ENCODE measurements at regions of chr22 and their contacts with region 1.

Region 1: DNA sequence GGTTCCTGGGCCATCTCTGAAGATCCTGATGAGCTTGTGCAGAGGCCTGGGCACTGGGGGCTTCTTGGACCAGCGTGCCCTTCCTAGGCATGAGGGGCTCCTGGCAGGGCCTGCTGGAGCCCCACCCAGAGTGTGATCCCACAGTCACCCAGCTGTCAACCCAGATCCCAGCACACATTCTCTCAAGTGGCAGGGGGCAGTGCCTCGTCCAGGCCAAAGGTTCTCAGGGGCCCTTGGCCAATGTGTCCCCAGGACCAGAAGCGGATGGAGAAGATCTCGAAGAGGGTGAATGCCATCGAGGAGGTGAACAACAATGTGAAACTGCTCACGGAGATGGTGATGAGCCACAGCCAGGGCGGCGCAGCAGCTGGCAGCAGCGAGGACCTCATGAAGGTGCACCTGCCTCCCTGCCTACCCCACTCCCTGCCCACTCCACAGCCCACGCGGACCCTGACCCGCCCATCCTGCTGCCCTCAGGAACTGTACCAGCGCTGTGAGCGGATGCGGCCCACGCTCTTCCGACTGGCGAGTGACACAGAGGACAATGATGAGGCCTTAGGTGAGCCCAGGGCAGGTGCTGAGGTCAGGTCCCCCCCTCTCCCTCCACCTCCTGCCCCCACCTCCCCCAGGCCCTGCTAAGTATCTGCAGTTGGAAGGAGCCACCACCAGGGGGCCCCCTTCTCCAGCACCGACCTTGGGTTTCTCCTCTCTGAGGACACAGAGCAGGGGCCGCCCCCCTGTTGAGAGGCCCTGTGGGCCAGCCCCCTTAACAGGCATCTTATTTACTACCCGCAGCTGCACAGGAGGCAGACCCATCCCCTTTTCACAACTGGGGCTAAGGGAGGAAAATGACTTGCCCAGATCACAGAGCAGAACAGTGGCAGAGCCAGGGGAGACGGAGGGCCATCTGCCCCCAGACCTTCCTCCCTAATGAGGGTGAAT is 14.7 kb downstream of the GGA1 start:
- DNase-seq: peak; percentile 83
- ATAC-seq: peak; percentile 83
- H3K4me3 ChIP-seq: no peak overlapping the region
- H3K4me3 Mint-ChIP-seq: peak overlapping the region; percentile 61
- H3K27ac ChIP-seq: peak overlapping the region; percentile 47 to 52
- H3K27ac Mint-ChIP-seq: peak overlapping the region; percentile 92
- H3K4me1 ChIP-seq: peaks cover 40 to 69% of the 10 kb centered on the region in 2 donors
- H3K4me1 Mint-ChIP-seq: peaks cover 60% of the 10 kb centered on the region
- H3K27me3 ChIP-seq: no peaks in the 10 kb centered on the region
- H3K27me3 Mint-ChIP-seq: no peaks in the 10 kb centered on the region
- CTCF ChIP-seq: peak; percentile 86

Region 2: DNA sequence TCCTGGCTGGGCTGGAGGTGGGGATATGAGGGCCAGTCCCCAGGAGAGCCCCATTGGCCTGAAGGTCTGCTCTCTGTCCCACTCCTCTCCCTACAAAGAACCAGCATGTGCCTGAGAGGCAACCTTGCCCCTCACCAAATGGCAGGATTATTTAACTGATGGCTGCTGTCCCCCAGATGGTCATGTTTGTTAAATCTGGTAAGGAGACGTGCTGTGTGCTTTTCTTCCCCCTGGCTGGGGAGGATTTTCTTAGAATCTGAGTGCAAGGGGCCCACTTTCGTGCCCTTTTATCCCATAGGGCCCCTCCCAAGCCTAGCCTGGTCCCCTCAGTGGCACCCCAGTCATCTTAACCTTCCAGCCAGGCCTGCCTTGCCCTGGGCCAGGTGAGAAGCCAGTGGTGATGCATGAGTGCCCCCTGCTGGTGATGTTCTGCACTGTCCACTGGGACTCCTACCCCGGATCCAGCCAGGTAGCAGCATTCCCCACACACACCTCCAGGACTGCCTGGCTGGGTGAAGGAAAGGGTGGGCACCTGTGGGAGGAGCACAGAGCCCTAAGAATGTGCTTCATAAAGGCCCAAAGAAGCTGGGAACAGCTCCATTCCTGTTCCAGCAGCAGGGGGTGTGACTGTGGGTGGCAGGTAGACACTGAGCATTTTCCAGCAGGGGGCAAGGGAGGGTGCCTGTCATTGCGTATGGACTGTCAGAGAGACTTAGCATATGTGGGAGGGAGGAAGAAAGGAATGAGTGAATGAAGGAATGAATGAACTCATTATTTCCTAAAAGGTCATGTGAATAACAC is 166.1 kb before region 1 on chr22:
- CTCF ChIA-PET with region 1: no interaction called
- POLR2A ChIA-PET with region 1: no interaction called
- intact Hi-C with region 1: no loop called
- DNase-seq: peak; percentile 82
- ATAC-seq: peak; percentile 95
- H3K4me3 ChIP-seq: no peak overlapping the region
- H3K4me3 Mint-ChIP-seq: no peak overlapping the region
- H3K27ac ChIP-seq: no peak overlapping the region
- H3K27ac Mint-ChIP-seq: no peak overlapping the region
- H3K4me1 ChIP-seq: no peaks in the 10 kb centered on the region
- H3K4me1 Mint-ChIP-seq: peaks cover 1% of the 10 kb centered on the region
- H3K27me3 ChIP-seq: no peaks in the 10 kb centered on the region
- H3K27me3 Mint-ChIP-seq: no peaks in the 10 kb centered on the region
- CTCF ChIP-seq: peak; percentile 97

Region 3: DNA sequence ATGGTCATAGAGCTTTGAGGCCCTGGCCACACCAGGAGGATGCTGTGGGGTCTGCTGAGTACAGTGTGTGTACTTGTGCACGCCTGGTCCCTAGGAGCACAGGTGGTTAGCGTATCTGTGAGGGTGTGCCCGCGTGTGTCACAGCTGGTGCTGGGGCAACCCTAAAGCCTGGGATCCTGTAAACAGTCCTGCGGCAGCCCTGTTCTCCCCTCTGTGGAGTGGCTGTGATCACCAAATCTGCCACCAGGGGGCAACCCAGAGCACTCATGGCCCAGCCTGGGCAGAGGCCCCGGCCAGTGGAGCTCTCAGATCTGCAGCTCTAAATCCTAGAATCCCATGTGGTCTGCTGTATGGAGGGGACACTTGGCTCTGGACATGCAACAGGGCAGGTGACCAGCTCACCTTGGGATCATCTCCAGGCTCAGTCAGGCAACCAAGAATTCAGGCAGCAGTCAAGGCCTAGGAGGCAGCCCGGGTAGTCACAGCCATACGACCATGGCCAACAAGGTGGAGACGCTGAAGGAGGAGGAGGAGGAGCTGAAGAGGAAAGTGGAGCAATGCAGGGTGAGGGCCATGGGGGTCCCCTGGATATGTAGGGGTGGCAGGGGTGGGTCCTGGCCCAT is 20.0 kb after region 1 on chr22:
- CTCF ChIA-PET with region 1: interaction called, 620 read pairs
- POLR2A ChIA-PET with region 1: interaction called, 11 read pairs
- intact Hi-C with region 1: loop called (anchors 1 kb)
- DNase-seq: peak; percentile 86
- ATAC-seq: peak; percentile 75
- H3K4me3 ChIP-seq: no peak overlapping the region
- H3K4me3 Mint-ChIP-seq: peak overlapping the region; percentile 56
- H3K27ac ChIP-seq: no peak overlapping the region
- H3K27ac Mint-ChIP-seq: peak overlapping the region; percentile 87
- H3K4me1 ChIP-seq: peaks cover 24 to 39% of the 10 kb centered on the region in 2 donors
- H3K4me1 Mint-ChIP-seq: peaks cover 35% of the 10 kb centered on the region
- H3K27me3 ChIP-seq: no peaks in the 10 kb centered on the region
- H3K27me3 Mint-ChIP-seq: no peaks in the 10 kb centered on the region
- CTCF ChIP-seq: peak; percentile 91

Region 4: DNA sequence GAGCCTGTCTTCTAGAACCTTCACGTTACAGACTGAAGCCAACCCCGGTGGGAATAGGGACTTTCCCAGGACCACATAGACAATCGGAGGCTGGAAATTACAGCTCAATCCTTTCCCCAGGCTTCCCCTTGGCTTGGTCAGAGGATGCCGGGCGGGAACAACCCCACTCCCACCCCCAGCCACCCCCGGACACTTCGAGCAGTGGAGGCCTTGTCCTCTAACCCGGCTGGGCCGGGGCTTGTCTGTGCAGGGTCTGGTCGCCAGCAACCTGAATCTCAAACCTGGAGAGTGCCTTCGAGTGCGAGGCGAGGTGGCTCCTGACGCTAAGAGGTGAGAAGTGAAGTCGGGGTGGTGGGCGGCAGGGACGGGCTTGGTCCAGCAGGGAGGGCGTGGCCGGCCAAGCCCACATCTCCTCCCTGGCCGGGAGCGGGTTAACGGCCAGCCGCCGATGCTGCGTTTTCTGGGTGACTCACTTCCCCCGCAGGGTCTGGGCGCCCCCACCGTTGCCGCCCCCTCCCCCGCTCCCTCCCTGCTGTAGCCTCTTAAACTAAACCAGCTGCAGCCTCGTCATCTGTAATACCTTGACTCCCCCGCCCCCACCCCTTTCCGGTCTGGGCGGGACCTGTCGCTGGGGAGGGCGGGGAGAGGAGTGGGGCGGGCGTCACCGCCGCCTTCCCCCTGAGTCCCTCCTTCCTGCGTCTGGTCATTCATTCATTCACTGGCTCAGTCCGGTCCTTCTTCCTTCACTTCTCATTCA is 53.6 kb after region 1 on chr22:
- CTCF ChIA-PET with region 1: interaction called, 185 read pairs
- POLR2A ChIA-PET with region 1: interaction called, 5 read pairs
- intact Hi-C with region 1: loop called (anchors 1 kb)
- DNase-seq: peak; percentile 95
- ATAC-seq: peak; percentile 83
- H3K4me3 ChIP-seq: peak overlapping the region; percentile 73 to 92 (median 81)
- H3K4me3 Mint-ChIP-seq: peak overlapping the region; percentile 96
- H3K27ac ChIP-seq: peak overlapping the region; percentile 98
- H3K27ac Mint-ChIP-seq: peak overlapping the region; percentile 97
- H3K4me1 ChIP-seq: peaks cover 34 to 63% of the 10 kb centered on the region in 2 donors
- H3K4me1 Mint-ChIP-seq: peaks cover 56% of the 10 kb centered on the region
- H3K27me3 ChIP-seq: no peaks in the 10 kb centered on the region
- H3K27me3 Mint-ChIP-seq: no peaks in the 10 kb centered on the region
- CTCF ChIP-seq: no peak

Region 5: DNA sequence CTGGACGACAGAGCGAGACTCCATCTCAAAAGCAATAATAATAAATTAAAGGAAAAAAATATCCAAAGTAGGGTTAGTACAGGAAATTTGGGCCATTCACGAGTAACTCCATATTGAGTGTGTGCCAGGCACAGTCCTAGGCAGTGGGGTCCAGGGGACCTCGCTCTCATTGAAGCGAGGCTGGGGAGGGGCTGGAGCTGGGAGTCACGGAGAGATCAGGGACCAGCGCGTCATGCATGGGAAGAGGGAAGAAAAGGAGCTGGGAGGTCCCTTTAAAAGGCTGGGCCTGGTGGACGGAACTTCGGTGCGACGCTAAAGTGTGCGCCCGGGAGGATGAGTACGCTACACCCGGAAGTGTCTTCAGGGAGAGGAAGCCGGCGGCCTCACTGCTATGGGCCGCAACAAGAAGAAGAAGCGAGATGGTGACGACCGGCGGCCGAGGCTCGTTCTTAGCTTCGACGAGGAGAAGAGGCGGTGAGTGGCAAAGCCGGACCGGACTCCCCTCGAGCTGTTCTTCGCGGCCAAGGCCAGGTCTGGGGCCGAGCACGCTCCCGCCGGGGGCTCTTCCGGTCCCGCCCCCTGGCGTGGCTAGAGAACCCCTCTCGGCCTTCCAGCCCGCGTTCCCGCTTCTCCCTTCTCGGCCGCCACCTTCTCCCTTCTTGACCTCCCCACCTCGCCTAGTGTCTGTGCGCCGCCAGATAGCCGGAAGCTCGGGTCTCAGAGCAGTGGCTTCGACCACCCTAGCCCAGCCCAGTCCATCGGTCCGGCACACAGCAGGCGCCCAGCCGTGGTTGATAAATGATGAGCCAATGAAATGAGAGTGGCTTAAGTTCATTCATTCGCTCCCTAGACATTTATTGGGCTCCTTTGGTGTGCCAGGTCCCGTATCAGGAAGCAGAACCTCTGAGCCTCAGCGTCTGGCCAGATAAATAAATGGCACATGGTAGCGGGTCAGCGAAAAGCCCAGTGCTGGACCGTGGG is 62.9 kb after region 1 on chr22 and contains the start of gene NOL12:
- CTCF ChIA-PET with region 1: interaction called, 185 read pairs
- POLR2A ChIA-PET with region 1: no interaction called
- intact Hi-C with region 1: loop called (anchors 1 kb)
- DNase-seq: peak; percentile 93
- ATAC-seq: peak; percentile 86
- H3K4me3 ChIP-seq: peak within 1 kb of the TSS; percentile 79 to 98 (median 88)
- H3K4me3 Mint-ChIP-seq: peak within 1 kb of the TSS; percentile 99
- H3K27ac ChIP-seq: peak within 1 kb of the TSS; percentile 70 to 81
- H3K27ac Mint-ChIP-seq: peak within 1 kb of the TSS; percentile 95
- H3K4me1 ChIP-seq: peaks cover 10 to 30% of the 10 kb centered on the region in 2 donors
- H3K4me1 Mint-ChIP-seq: peaks cover 28% of the 10 kb centered on the region
- H3K27me3 ChIP-seq: no peaks in the 10 kb centered on the region
- H3K27me3 Mint-ChIP-seq: no peaks in the 10 kb centered on the region
- CTCF ChIP-seq: no peak
- total RNA-seq, gene NOL12: 34.7 and 38.5 TPM in 2 replicates

Measured in B cell (primary cell).